Breast epithelium (tissue), 4 donors: ENCODE measurements at regions of chr4 and their contacts with region 1.

Region 1: DNA sequence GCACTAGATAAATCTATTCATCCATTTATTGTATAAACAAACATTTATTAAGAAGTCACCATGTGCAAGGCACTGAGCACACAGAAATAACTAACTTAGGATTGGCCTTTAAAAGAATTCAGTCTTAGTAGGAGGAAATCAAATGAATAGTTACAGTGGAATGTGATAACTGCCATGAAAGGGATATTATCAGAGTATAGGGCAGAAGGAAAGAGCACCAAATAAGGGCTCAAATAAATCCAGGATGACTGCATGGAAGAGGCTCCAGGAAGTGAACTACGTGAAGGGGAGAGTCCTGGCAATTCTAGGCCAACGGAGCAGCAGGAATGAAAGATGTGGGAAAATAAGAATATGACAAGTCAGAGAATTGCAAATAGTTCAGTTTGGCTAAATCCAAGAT is 406.0 kb downstream of the INPP4B start:
- DNase-seq: no peak
- H3K4me3 ChIP-seq: no peak overlapping the region
- H3K27ac ChIP-seq: no peak overlapping the region
- H3K4me1 ChIP-seq: no peaks in the 10 kb centered on the region
- H3K27me3 ChIP-seq: no peaks in the 10 kb centered on the region
- CTCF ChIP-seq: no peak
- POLR2A ChIP-seq: no peak

Region 2: GRCh38 chr4:142373610-142374009 is 66.5 kb before region 1 on chr4:
- intact Hi-C with region 1: loop called (anchors 2 kb)
- DNase-seq: no peak
- H3K4me3 ChIP-seq: no peak overlapping the region
- H3K27ac ChIP-seq: no peak overlapping the region
- H3K4me1 ChIP-seq: no peaks in the 10 kb centered on the region
- H3K27me3 ChIP-seq: no peaks in the 10 kb centered on the region
- CTCF ChIP-seq: no peak
- POLR2A ChIP-seq: no peak